ENCODE measurements at regions of chr13 and their contacts with region 1.

Region 1: GRCh38 chr13:110944121-110944967 is 29.5 kb upstream of the ANKRD10 start:
- ATAC-seq: peak; percentile 83 to 96 (median 90)
- H3K4me3 ChIP-seq: no peak overlapping the region
- H3K27ac ChIP-seq: no peak overlapping the region
- H3K4me1 ChIP-seq: no peaks in the 10 kb centered on the region

Region 2: GRCh38 chr13:111046590-111047141 is 102.3 kb after region 1 on chr13:
- in situ Hi-C with region 1: loop called in 1 of 9 experiments (anchors 25 kb)
- ATAC-seq: peak in 2 of 8 experiments; percentile 3 to 16
- H3K4me3 ChIP-seq: no peak overlapping the region
- H3K27ac ChIP-seq: no peak overlapping the region
- H3K4me1 ChIP-seq: no peaks in the 10 kb centered on the region

Measured in motor neuron (in vitro differentiated cells).